PC-3 (cell line): ENCODE measurements at regions of chr14 and their contacts with region 1.

Region 1: DNA sequence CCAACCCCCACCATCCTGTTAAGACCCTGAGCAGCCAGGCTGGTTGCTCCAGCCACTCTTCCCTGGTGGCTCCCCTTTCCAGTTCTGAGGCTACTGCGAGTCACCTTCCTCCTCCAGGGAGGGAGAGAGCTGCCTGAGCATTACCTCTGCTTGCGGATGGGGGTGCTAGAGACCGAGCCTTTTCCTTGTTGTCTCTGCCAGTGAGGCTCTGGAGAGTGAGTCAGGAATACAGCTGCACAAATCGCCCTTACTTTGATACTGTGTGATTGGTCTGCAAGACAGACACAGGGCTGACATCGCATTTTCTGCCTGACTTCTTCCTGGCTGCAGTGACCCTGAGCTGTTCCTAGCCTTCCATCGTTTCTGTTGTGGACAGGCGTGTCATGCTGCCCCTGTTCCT is 94.3 kb downstream of the SLC25A47 start:
- DNase-seq: peak; percentile 94
- ATAC-seq: peak; percentile 91
- H3K4me3 ChIP-seq: no peak overlapping the region
- H3K27ac ChIP-seq: peak overlapping the region; percentile 91
- H3K4me1 ChIP-seq: peaks cover 30% of the 10 kb centered on the region
- H3K27me3 ChIP-seq: no peaks in the 10 kb centered on the region
- CTCF ChIP-seq: peak; percentile 88

Region 2: GRCh38 chr14:100362311-100362927 is 55.0 kb before region 1 on chr14:
- CTCF ChIA-PET with region 1: no interaction called
- POLR2A ChIA-PET with region 1: no interaction called
- intact Hi-C with region 1: no loop called
- DNase-seq: no peak
- ATAC-seq: no peak
- H3K4me3 ChIP-seq: no peak overlapping the region
- H3K27ac ChIP-seq: no peak overlapping the region
- H3K4me1 ChIP-seq: no peaks in the 10 kb centered on the region
- H3K27me3 ChIP-seq: no peaks in the 10 kb centered on the region
- CTCF ChIP-seq: no peak

Region 3: GRCh38 chr14:100383727-100384158 is 33.7 kb before region 1 on chr14:
- CTCF ChIA-PET with region 1: interaction called, 21 read pairs
- POLR2A ChIA-PET with region 1: interaction called, 3 read pairs
- intact Hi-C with region 1: loop called (anchors 1 kb)
- DNase-seq: peak; percentile 76
- ATAC-seq: peak; percentile 61
- H3K4me3 ChIP-seq: no peak overlapping the region
- H3K27ac ChIP-seq: no peak overlapping the region; the same call in 1 of the 2 replicates
- H3K4me1 ChIP-seq: peaks cover 33% of the 10 kb centered on the region
- H3K27me3 ChIP-seq: no peaks in the 10 kb centered on the region
- CTCF ChIP-seq: peak; percentile 90

Region 4: GRCh38 chr14:100645192-100645990 is 227.9 kb after region 1 on chr14:
- CTCF ChIA-PET with region 1: interaction called, 25 read pairs
- POLR2A ChIA-PET with region 1: no interaction called
- intact Hi-C with region 1: loop called (anchors 1 kb)
- DNase-seq: peak; percentile 90
- ATAC-seq: peak; percentile 88
- H3K4me3 ChIP-seq: no peak overlapping the region
- H3K27ac ChIP-seq: no peak overlapping the region
- H3K4me1 ChIP-seq: peaks cover 16% of the 10 kb centered on the region
- H3K27me3 ChIP-seq: no peaks in the 10 kb centered on the region
- CTCF ChIP-seq: peak; percentile 87

Region 5: GRCh38 chr14:100654814-100655740 is 237.6 kb after region 1 on chr14:
- CTCF ChIA-PET with region 1: interaction called, 4 read pairs
- POLR2A ChIA-PET with region 1: no interaction called
- intact Hi-C with region 1: loop called (anchors 1 kb)
- DNase-seq: peak; percentile 56
- ATAC-seq: peak; percentile 87
- H3K4me3 ChIP-seq: peak overlapping the region; percentile 66
- H3K27ac ChIP-seq: no peak overlapping the region
- H3K4me1 ChIP-seq: peaks cover 11% of the 10 kb centered on the region
- H3K27me3 ChIP-seq: no peaks in the 10 kb centered on the region
- CTCF ChIP-seq: peak; percentile 76